ENCODE measurements at regions of chr17 and their contacts with region 1.

Region 1: DNA sequence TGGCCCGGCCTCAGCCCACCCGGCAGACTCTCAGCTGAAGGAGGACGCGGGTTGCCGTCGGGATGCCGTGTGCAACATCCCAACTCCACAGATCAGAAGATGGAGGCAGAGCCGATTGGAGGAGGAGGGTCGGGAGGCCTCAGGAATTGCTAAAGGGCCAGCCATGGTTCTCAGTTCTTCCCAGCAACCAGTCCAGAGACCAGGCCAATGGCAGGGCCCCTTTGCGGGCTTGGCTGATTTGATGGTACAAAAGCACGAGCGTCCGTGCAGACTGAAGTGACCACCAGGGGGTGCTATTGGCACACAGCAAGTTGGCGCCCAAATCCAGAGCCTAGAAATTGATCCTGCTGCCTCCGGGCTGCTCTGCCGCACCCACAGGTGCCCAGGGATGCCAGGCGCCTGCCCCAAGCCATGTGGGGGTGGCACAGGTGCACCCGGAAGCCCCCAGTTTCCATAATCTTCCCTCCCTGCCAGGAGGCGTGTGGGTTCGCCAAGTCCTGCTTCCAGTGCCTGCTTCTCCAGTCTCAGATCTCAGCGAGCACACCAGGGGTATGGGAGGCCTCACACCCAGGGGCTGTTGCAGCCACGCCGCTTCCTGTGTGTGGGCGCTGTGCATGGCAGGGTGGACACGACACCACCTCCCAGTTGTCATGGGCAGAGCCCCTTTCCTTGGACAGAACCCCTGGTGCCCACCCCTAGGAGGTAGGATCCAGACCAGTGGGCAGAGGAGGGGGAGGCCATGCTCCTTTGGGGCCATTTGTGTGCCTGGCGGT is 7.1 kb upstream of the TEX19 start:
- DNase-seq: peak; percentile 54 to 89 (median 82)
- ATAC-seq: peak; percentile 90
- H3K4me3 ChIP-seq: no peak overlapping the region
- H3K4me3 Mint-ChIP-seq: no peak overlapping the region
- H3K27ac ChIP-seq: no peak overlapping the region
- H3K27ac Mint-ChIP-seq: no peak overlapping the region
- H3K4me1 ChIP-seq: no peaks in the 10 kb centered on the region
- H3K4me1 Mint-ChIP-seq: no peaks in the 10 kb centered on the region
- H3K27me3 ChIP-seq: peaks cover 0 to under 1% of the 10 kb centered on the region in 2 experiments
- H3K27me3 Mint-ChIP-seq: peaks cover 11% of the 10 kb centered on the region
- CTCF ChIP-seq: peak; percentile 93

Region 2: GRCh38 chr17:81519284-81519955 is 832.5 kb before region 1 on chr17:
- CTCF ChIA-PET with region 1: no interaction called
- POLR2A ChIA-PET with region 1: no interaction called
- intact Hi-C with region 1: no loop called
- DNase-seq: peak; percentile 37 to 86 (median 74)
- ATAC-seq: peak; percentile 70
- H3K4me3 ChIP-seq: peak overlapping the region; percentile 37 to 60
- H3K4me3 Mint-ChIP-seq: peak overlapping the region; percentile 32
- H3K27ac ChIP-seq: no peak overlapping the region
- H3K27ac Mint-ChIP-seq: no peak overlapping the region
- H3K4me1 ChIP-seq: peaks cover 42% of the 10 kb centered on the region
- H3K4me1 Mint-ChIP-seq: peaks cover 30% of the 10 kb centered on the region
- H3K27me3 ChIP-seq: peaks cover 0 to 13% of the 10 kb centered on the region in 2 experiments
- H3K27me3 Mint-ChIP-seq: peaks cover 2% of the 10 kb centered on the region
- CTCF ChIP-seq: peak; percentile 96

Region 3: DNA sequence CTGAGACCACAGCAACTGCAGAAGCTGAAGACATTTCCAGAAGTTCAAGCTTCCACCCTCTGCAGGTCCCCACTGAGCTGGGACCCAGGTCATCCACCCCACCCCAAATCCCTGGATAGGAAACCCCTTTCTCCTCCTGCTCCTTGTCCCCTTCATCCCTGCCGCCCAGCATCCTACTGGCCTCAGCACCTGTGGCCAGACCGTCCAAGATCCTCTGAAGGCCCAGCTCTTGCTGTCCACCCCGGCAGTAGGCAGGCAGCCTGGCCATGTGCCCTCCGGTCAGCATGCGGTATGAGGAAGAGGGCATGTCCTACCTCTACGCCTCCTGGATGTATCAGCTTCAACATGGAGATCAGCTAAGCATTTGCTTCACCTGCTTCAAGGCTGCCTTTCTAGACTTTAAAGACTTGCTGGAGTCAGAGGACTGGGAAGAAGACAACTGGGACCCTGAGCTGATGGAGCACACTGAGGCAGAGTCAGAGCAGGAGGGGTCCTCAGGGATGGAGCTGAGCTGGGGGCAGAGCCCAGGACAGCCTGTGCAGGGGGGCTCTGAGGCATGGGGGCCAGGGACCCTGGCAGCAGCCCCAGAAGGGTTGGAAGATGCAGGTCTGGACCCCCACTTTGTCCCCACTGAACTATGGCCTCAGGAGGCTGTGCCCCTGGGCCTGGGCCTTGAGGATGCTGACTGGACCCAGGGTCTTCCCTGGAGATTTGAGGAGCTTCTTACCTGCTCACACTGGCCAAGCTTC is 10.2 kb after region 1 on chr17:
- CTCF ChIA-PET with region 1: interaction called, 17 read pairs
- POLR2A ChIA-PET with region 1: no interaction called
- intact Hi-C with region 1: no loop called
- DNase-seq: no peak
- ATAC-seq: no peak
- H3K4me3 ChIP-seq: no peak overlapping the region
- H3K4me3 Mint-ChIP-seq: no peak overlapping the region
- H3K27ac ChIP-seq: no peak overlapping the region
- H3K27ac Mint-ChIP-seq: no peak overlapping the region
- H3K4me1 ChIP-seq: no peaks in the 10 kb centered on the region
- H3K4me1 Mint-ChIP-seq: peaks cover 6% of the 10 kb centered on the region
- H3K27me3 ChIP-seq: peaks cover 0 to 1% of the 10 kb centered on the region in 2 experiments
- H3K27me3 Mint-ChIP-seq: peaks cover 10% of the 10 kb centered on the region
- CTCF ChIP-seq: no peak

Region 4: DNA sequence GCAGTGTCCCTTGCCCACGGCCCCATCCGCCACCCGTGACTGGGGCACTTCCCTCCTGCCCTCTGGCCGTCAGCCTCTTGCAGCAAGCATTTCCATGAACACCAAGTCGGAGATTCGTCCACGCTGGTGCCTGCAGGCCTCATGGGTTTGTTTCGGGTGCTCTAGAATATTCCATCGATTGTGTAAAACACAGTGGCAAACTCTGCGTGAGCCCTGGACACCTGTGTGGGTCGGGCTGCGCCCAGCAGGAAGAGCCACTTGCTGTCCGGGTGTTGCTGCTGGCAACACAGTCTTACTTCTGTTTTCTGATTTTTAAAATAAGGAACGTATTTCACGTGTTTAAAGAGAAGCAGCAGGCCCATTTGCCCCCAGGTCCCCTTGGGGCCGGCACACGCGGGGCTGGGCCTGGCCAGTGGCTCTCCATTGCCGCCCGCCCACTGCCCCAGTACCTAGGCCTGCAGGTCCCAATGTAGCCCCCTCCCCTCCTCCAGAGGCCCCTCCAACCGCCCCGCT is 88.6 kb after region 1 on chr17:
- CTCF ChIA-PET with region 1: no interaction called
- POLR2A ChIA-PET with region 1: no interaction called
- intact Hi-C with region 1: no loop called
- DNase-seq: peak in 1 of 9 experiments; percentile 13
- ATAC-seq: no peak
- H3K4me3 ChIP-seq: no peak overlapping the region
- H3K4me3 Mint-ChIP-seq: no peak overlapping the region
- H3K27ac ChIP-seq: no peak overlapping the region
- H3K27ac Mint-ChIP-seq: peak overlapping the region; percentile 56
- H3K4me1 ChIP-seq: no peaks in the 10 kb centered on the region
- H3K4me1 Mint-ChIP-seq: peaks cover 4% of the 10 kb centered on the region
- H3K27me3 ChIP-seq: no peaks in the 10 kb centered on the region
- H3K27me3 Mint-ChIP-seq: no peaks in the 10 kb centered on the region
- CTCF ChIP-seq: no peak

Region 5: GRCh38 chr17:82494236-82495055 is 142.5 kb after region 1 on chr17:
- CTCF ChIA-PET with region 1: interaction called, 4 read pairs
- POLR2A ChIA-PET with region 1: no interaction called
- intact Hi-C with region 1: loop called (anchors 1 to 2 kb)
- DNase-seq: peak; percentile 79 to 94 (median 90)
- ATAC-seq: peak; percentile 76
- H3K4me3 ChIP-seq: no peak overlapping the region
- H3K4me3 Mint-ChIP-seq: peak overlapping the region; percentile 68
- H3K27ac ChIP-seq: peak overlapping the region in 1 of 2 experiments; percentile 57
- H3K27ac Mint-ChIP-seq: peak overlapping the region; percentile 80
- H3K4me1 ChIP-seq: peaks cover 19% of the 10 kb centered on the region
- H3K4me1 Mint-ChIP-seq: peaks cover 24% of the 10 kb centered on the region
- H3K27me3 ChIP-seq: no peaks in the 10 kb centered on the region
- H3K27me3 Mint-ChIP-seq: no peaks in the 10 kb centered on the region
- CTCF ChIP-seq: peak; percentile 67

Region 6: GRCh38 chr17:82775001-82775823 is 423.3 kb after region 1 on chr17:
- CTCF ChIA-PET with region 1: no interaction called
- POLR2A ChIA-PET with region 1: no interaction called
- intact Hi-C with region 1: loop called (anchors 5 kb)
- DNase-seq: peak in 8 of 9 experiments; percentile 17 to 82 (median 54)
- ATAC-seq: peak; percentile 89
- H3K4me3 ChIP-seq: peak overlapping the region in 1 of 2 experiments; percentile 42
- H3K4me3 Mint-ChIP-seq: peak overlapping the region; percentile 64
- H3K27ac ChIP-seq: peak overlapping the region in 1 of 2 experiments; percentile 59
- H3K27ac Mint-ChIP-seq: peak overlapping the region; percentile 82
- H3K4me1 ChIP-seq: peaks cover 19% of the 10 kb centered on the region
- H3K4me1 Mint-ChIP-seq: peaks cover 28% of the 10 kb centered on the region
- H3K27me3 ChIP-seq: no peaks in the 10 kb centered on the region
- H3K27me3 Mint-ChIP-seq: no peaks in the 10 kb centered on the region
- CTCF ChIP-seq: peak; percentile 69